ENCODE measurements at regions of chr11 and their contacts with region 1.

Region 1: GRCh38 chr11:125164422-125165110 is at the start of gene PKNOX2:
- DNase-seq: peak; percentile 84
- ATAC-seq: peak; percentile 88
- total RNA-seq, gene PKNOX2: 5.8 TPM

Region 2: DNA sequence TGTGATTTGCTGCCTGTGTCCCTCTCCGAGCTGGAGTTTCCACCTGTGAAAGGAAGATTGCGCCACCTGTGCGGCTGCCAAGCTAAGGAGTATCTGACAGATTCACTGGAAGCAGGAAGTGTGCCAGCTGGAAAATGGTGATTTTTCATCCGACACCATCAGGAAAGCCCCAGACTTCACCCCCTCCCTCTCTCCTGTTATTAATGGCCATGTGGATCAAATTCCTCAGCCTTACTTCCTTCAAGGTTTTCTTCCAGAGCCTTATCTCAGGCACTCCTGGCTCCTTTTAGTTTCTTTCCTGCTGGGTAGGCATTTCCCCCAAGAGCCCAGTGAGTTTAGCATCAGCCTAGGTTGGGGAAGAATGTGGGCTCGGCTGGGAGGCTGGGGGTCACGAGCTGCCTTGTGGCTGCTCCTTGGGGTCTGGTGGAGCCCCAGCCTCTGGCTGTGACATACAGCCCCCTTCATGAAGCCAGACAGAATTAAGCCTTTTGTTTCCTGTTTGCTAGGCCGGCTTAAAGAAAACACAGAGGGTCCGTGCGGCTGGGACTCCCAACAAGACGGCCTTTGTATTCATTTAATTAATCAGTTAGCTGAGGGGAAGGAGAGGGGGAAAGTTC is 37.1 kb after region 1 on chr11:
- intact Hi-C with region 1: no loop called
- DNase-seq: no peak
- ATAC-seq: no peak

Region 3: GRCh38 chr11:125345421-125346178 is 181.0 kb after region 1 on chr11:
- intact Hi-C with region 1: loop called (anchors 2 kb)
- DNase-seq: peak; percentile 88
- ATAC-seq: peak; percentile 89

Region 4: GRCh38 chr11:125404776-125405435 is 240.3 kb after region 1 on chr11:
- intact Hi-C with region 1: loop called (anchors 10 kb)
- DNase-seq: peak; percentile 82
- ATAC-seq: peak; percentile 91

Measured in Right ventricle myocardium superior (tissue), 1 donor.